ENCODE measurements at regions of chr16 and their contacts with region 1.

Region 1: GRCh38 chr16:67942200-67942509 is 1.8 kb downstream of the LCAT start:
- DNase-seq: peak; percentile 59
- ATAC-seq: peak; percentile 66
- H3K4me3 Mint-ChIP-seq: no peak overlapping the region
- H3K27ac Mint-ChIP-seq: peak overlapping the region; percentile 59
- H3K4me1 Mint-ChIP-seq: peaks cover 33% of the 10 kb centered on the region
- H3K27me3 Mint-ChIP-seq: no peaks in the 10 kb centered on the region
- CTCF ChIP-seq: peak; percentile 61

Region 2: DNA sequence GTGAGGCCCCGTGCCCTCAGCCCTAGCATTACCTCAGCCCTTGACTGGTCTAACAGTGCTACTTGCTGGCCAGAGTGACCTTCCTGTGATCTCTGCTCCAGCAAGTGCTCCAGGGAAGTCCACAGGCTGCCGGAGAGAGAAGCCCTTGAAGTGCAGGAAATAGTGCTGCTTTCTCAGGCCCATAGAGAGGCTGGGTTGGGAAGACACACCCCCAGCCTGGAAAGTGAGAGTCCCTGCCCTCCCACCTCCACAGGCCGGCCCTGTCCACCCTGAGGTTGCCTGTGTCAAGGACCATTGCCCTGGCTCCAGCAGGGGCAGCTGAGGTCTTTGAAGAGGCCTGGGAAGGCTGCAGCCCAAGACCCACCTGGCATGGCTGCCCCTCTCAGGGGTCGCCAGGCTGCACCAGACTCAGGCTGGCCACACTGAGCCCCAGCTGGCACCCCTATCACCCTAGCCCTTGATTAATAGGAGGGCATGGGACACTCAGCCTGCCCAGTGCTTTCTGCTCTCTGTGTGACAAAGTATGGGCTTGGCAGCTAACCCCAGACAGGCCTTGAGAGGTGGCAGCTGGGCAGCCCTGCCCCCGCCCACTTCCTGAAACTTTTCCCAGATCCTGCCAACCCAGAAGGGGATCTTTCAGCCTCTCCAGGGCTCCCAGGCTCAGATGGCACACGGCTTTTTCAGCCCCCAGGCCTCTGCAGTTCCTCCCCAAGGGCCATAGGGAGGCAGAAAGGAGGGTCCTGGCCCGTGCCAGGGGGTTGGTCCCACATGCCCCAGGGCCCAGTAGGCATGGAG is 482.9 kb before region 1 on chr16:
- CTCF ChIA-PET with region 1: no interaction called
- POLR2A ChIA-PET with region 1: no interaction called
- intact Hi-C with region 1: no loop called
- DNase-seq: no peak
- ATAC-seq: no peak
- H3K4me3 Mint-ChIP-seq: no peak overlapping the region
- H3K27ac Mint-ChIP-seq: no peak overlapping the region
- H3K4me1 Mint-ChIP-seq: peaks cover 10% of the 10 kb centered on the region
- H3K27me3 Mint-ChIP-seq: no peaks in the 10 kb centered on the region
- CTCF ChIP-seq: no peak

Region 3: DNA sequence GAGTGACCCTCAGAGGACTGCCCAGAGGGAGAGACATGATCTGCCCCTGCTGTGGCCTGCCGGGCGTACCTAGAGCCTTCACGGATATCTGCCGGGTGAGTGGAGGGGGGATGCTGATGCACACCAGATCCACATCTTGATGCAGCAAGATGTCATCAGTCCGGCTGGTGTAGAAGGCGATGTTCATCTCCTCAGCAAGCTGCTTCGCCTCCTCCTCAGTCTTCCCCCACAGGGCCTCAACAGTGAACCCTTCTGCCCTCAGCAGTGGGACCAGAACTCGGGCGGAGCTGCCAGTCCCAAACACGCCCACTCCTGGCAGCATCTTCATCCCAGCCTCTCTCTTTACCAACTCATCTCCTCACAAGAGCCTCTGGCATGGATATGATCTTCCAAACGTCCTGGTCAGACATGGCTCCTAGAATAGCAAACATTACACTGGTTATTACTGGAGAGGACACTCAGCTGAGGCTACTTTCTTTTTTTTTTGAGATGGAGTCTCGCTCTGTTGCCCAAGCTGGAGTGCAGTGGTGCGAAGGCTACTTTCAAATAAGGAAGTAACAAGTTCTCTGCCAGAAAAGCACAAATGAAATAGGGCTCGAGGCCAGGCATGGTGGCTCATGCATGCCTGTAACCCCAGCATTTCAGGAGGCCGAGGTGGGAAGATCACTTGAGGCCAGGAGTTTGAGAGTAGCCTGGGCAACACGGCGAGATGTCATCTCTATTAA is 256.6 kb before region 1 on chr16:
- CTCF ChIA-PET with region 1: no interaction called
- POLR2A ChIA-PET with region 1: no interaction called
- intact Hi-C with region 1: no loop called
- DNase-seq: no peak
- ATAC-seq: no peak
- H3K4me3 Mint-ChIP-seq: no peak overlapping the region
- H3K27ac Mint-ChIP-seq: no peak overlapping the region
- H3K4me1 Mint-ChIP-seq: no peaks in the 10 kb centered on the region
- H3K27me3 Mint-ChIP-seq: no peaks in the 10 kb centered on the region
- CTCF ChIP-seq: no peak

Region 4: DNA sequence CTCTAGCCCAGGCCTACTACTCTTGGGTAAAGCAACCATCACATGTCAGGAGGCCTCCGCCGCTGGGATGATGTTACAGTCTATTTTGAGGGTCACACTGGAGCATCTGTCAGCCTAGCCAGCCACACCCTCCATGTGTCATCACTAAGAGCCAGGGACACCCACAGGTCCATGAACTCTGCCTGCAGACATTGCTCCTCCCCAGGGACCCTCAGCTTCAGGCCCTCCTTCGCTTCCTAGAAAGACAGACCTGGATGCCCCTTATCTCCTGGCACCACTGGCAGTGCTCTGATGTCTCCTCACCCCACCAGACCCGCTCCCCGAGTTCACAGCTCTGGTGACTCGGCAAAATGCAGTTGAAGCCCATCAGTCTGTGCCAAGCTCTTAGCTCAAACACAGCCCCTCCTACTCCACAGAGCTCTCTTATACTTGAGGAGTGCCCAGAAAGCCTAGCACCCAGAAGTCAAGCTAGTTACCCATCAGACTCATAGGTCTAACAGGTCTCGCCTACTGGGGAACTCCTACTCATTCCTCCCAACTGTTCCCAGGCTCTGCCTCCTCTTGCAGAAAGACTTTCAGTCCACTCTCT is 141.7 kb before region 1 on chr16:
- CTCF ChIA-PET with region 1: no interaction called
- POLR2A ChIA-PET with region 1: no interaction called
- intact Hi-C with region 1: no loop called
- DNase-seq: no peak
- ATAC-seq: no peak
- H3K4me3 Mint-ChIP-seq: no peak overlapping the region
- H3K27ac Mint-ChIP-seq: peak overlapping the region; percentile 29
- H3K4me1 Mint-ChIP-seq: peaks cover 53% of the 10 kb centered on the region
- H3K27me3 Mint-ChIP-seq: no peaks in the 10 kb centered on the region
- CTCF ChIP-seq: no peak

Region 5: GRCh38 chr16:67959520-67959919 is 17.4 kb after region 1 on chr16:
- CTCF ChIA-PET with region 1: interaction called, 15 read pairs
- POLR2A ChIA-PET with region 1: interaction called, 3 read pairs
- intact Hi-C with region 1: no loop called
- DNase-seq: no peak
- ATAC-seq: no peak
- H3K4me3 Mint-ChIP-seq: no peak overlapping the region
- H3K27ac Mint-ChIP-seq: no peak overlapping the region
- H3K4me1 Mint-ChIP-seq: no peaks in the 10 kb centered on the region
- H3K27me3 Mint-ChIP-seq: no peaks in the 10 kb centered on the region
- CTCF ChIP-seq: no peak

Region 6: DNA sequence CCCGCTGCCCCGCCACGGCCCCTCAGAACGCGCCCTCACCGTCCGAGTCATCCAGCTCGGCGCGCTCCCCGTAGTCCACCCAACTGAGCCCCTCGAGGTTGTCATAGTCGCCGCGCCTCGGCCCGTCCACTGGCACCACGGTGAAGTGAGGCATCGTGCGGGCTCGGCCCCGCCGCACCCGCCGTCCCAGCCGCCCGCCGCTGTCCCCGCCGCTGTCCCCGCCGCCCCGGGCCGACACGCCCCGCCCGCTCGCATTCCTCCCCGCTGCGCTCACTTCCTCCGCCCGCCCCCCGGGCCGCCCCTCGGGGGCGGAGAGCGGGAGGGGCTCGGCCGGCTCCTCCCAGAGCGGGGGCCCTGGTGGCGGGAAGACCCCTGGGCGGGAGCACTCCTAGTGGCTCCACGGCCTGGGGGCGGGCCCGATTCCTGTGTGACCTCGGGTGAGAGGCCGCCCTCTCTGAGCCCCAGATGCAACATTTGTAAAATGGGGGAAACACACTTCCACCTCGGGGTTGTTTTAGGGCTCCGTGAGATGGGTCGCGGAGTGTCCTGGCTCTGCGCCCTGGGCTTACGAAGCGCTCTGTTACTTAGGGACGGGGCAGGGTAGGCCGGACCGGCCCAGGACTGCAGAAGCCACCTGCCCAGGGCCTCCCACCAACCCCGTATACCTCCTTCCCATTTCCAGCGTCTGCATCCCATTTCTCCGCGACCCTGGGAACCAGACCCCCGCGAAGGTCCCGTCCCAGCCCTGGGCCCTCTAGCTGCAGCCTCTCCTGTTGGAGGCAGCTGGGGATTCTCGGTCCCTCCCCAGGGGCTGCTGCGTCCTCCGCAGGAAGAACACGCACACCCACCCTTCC is 26.5 kb after region 1 on chr16 and contains the start of gene SLC12A4:
- CTCF ChIA-PET with region 1: interaction called, 11 read pairs
- POLR2A ChIA-PET with region 1: interaction called, 12 read pairs
- intact Hi-C with region 1: no loop called
- DNase-seq: peak; percentile 96
- ATAC-seq: peak; percentile 92
- H3K4me3 Mint-ChIP-seq: peak within 1 kb of the TSS; percentile 95
- H3K27ac Mint-ChIP-seq: peak within 1 kb of the TSS; percentile 93
- H3K4me1 Mint-ChIP-seq: peaks cover 18% of the 10 kb centered on the region
- H3K27me3 Mint-ChIP-seq: no peaks in the 10 kb centered on the region
- CTCF ChIP-seq: no peak
- total RNA-seq, gene SLC12A4: 32.5 to 38.0 TPM

Region 7: GRCh38 chr16:68002301-68003004 is 60.3 kb after region 1 on chr16:
- CTCF ChIA-PET with region 1: no interaction called
- POLR2A ChIA-PET with region 1: no interaction called
- intact Hi-C with region 1: no loop called
- DNase-seq: no peak
- ATAC-seq: no peak
- H3K4me3 Mint-ChIP-seq: no peak overlapping the region
- H3K27ac Mint-ChIP-seq: no peak overlapping the region
- H3K4me1 Mint-ChIP-seq: peaks cover 53% of the 10 kb centered on the region
- H3K27me3 Mint-ChIP-seq: no peaks in the 10 kb centered on the region
- CTCF ChIP-seq: no peak